Heart right ventricle (tissue), 16 donors: ENCODE measurements at regions of chr18 and their contacts with region 1.

Region 1: DNA sequence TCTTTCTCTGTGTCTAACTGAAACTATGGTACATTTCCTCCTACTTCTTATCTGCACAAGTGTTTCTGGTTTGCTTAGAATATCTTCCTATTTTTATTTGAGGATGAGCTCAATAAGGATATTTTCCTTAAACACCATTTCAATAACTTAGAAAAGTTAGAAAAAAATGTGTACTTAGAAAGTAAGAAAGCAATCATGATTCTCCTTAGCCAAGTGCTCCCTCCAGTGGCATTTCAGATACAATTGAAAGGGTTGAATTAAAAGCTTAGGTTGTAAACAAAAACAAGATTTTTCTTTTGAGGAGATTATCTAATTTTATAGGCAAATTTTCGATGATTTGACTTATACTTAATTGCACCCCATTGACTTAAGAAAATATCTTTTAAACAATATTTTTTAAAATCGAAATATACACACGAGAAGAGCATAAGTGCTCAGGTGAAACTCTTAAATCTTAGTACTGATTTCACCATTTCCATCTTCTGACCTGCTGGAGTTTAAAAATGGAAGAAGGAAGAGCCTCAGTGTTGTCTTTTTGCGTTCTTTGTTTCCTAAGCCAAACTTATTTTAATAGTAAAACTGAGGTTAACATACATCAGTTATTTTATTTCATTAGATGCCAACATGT is 26.9 kb downstream of the C18orf63 start:
- DNase-seq: peak in 1 of 2 donors; percentile 32
- ATAC-seq: no peak
- H3K4me3 ChIP-seq: no peak overlapping the region
- H3K27ac ChIP-seq: no peak overlapping the region
- H3K4me1 ChIP-seq: no peaks in the 10 kb centered on the region
- H3K27me3 ChIP-seq: peaks cover 0 to 11% (median 0%) of the 10 kb centered on the region in 7 donors
- CTCF ChIP-seq: peak; percentile 58 to 87 (median 75)

Region 2: GRCh38 chr18:74190086-74190485 is 152.4 kb before region 1 on chr18:
- intact Hi-C with region 1: loop called in 2 of 10 experiments (anchors 5 kb)
- DNase-seq: no peak
- ATAC-seq: peak in 1 of 8 donors; percentile 42
- H3K4me3 ChIP-seq: no peak overlapping the region
- H3K27ac ChIP-seq: no peak overlapping the region
- H3K4me1 ChIP-seq: no peaks in the 10 kb centered on the region
- H3K27me3 ChIP-seq: peaks cover 0 to 30% (median 7%) of the 10 kb centered on the region in 7 donors
- CTCF ChIP-seq: no peak

Region 3: DNA sequence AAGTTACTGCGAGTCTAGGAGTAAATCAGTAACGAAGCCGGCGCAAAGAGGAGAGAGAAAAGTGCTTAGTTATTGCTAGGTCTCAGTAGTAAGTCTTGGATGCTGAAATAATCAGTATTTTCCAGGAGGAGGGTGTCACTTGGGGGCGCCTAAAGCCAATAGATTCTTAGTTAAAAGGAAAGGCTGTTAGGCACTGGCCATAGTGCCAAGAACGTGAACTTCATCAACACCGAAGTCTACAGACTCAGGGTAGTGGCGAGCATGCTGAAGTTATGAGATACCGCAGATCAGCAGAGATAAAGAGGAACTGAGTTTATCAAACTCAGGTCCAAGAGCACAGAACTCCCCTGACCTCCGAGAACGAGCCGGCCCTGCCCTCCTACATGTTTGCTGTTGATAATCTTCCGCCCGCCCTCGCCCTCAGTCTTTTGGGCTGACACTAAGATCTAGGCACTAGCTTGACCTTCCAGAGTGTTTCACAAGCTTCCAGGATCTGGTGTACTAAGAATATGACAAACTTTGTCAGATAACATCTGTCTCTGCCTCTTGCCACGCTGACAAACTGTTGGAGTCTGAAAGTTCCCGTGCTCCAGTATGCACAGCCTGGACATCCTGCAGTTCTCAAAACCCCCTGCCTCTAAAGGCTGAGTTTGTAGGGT is 100.0 kb before region 1 on chr18:
- intact Hi-C with region 1: loop called (anchors 1 to 5 kb)
- DNase-seq: peak in 1 of 2 donors; percentile 27
- ATAC-seq: peak; percentile 64 to 88 (median 80)
- H3K4me3 ChIP-seq: peak overlapping the region in 4 of 10 donors; percentile 0 to 30 (median 14)
- H3K27ac ChIP-seq: no peak overlapping the region
- H3K4me1 ChIP-seq: peaks cover 0 to 5% (median 0%) of the 10 kb centered on the region in 9 donors
- H3K27me3 ChIP-seq: peaks cover 0 to 8% (median 0%) of the 10 kb centered on the region in 7 donors
- CTCF ChIP-seq: peak in 8 of 9 donors; percentile 10 to 63 (median 46)

Region 4: DNA sequence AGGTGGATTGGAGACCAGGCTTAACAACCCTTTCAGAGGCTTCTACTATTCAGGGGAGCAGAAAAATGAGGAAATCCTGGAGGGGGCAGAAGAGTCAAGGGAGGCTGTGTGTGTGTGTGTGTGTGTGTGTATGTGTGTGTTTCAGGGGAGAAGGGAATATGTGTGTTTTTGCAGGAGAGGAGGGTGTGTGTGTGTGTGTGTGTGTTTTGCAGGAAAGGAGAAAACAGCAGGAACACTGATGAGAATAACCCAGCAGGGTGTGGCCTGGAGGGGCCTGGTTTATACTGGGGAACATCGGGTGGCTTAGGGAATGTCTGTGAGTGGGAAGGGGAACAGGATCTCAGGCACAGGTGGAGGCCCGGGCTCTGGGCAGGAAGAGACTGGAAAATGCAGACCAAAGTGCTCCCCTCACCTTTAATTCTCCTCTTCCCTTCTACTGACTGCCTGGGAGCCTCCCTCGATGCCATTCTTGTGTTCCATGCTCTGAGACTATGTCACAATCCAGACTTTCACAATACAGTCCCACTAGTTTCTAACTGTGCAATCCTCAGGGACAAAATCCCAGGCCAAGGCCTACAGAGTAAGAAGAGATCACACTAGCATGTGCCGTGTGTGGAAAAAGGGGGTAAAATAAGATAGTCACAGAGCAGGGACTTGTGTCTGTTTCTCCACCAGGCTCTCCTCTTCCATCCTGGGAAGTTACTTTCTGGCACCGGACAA is 60.7 kb before region 1 on chr18:
- intact Hi-C with region 1: no loop called
- DNase-seq: no peak
- ATAC-seq: peak in 4 of 8 donors; percentile 4 to 81 (median 23)
- H3K4me3 ChIP-seq: no peak overlapping the region
- H3K27ac ChIP-seq: peak overlapping the region in 7 of 10 donors; percentile 3 to 94 (median 15)
- H3K4me1 ChIP-seq: peaks cover 26 to 84% (median 70%) of the 10 kb centered on the region in 9 donors
- H3K27me3 ChIP-seq: no peaks in the 10 kb centered on the region
- CTCF ChIP-seq: no peak